ENCODE measurements at regions of chr2 and their contacts with region 1.

Region 1: GRCh38 chr2:240586198-240586918 is at the start of gene CAPN10:
- DNase-seq: peak; percentile 93 to 94
- H3K4me3 ChIP-seq: peak within 1 kb of the TSS; percentile 71
- H3K4me3 Mint-ChIP-seq: peak within 1 kb of the TSS; percentile 89
- H3K27ac Mint-ChIP-seq: peak within 1 kb of the TSS; percentile 71
- H3K4me1 ChIP-seq: no peaks in the 10 kb centered on the region
- H3K4me1 Mint-ChIP-seq: peaks cover 16% of the 10 kb centered on the region
- H3K27me3 ChIP-seq: no peaks in the 10 kb centered on the region
- H3K27me3 Mint-ChIP-seq: no peaks in the 10 kb centered on the region
- CTCF ChIP-seq: no peak
- total RNA-seq, gene CAPN10: 27.8 and 30.9 TPM in 2 replicates

Region 2: GRCh38 chr2:240339996-240340761 is 246.2 kb before region 1 on chr2:
- CTCF ChIA-PET with region 1: no interaction called
- POLR2A ChIA-PET with region 1: no interaction called
- intact Hi-C with region 1: no loop called
- DNase-seq: no peak
- H3K4me3 ChIP-seq: no peak overlapping the region
- H3K4me3 Mint-ChIP-seq: no peak overlapping the region
- H3K27ac Mint-ChIP-seq: no peak overlapping the region
- H3K4me1 ChIP-seq: no peaks in the 10 kb centered on the region
- H3K4me1 Mint-ChIP-seq: no peaks in the 10 kb centered on the region
- H3K27me3 ChIP-seq: no peaks in the 10 kb centered on the region
- H3K27me3 Mint-ChIP-seq: peaks cover 7% of the 10 kb centered on the region
- CTCF ChIP-seq: no peak

Region 3: DNA sequence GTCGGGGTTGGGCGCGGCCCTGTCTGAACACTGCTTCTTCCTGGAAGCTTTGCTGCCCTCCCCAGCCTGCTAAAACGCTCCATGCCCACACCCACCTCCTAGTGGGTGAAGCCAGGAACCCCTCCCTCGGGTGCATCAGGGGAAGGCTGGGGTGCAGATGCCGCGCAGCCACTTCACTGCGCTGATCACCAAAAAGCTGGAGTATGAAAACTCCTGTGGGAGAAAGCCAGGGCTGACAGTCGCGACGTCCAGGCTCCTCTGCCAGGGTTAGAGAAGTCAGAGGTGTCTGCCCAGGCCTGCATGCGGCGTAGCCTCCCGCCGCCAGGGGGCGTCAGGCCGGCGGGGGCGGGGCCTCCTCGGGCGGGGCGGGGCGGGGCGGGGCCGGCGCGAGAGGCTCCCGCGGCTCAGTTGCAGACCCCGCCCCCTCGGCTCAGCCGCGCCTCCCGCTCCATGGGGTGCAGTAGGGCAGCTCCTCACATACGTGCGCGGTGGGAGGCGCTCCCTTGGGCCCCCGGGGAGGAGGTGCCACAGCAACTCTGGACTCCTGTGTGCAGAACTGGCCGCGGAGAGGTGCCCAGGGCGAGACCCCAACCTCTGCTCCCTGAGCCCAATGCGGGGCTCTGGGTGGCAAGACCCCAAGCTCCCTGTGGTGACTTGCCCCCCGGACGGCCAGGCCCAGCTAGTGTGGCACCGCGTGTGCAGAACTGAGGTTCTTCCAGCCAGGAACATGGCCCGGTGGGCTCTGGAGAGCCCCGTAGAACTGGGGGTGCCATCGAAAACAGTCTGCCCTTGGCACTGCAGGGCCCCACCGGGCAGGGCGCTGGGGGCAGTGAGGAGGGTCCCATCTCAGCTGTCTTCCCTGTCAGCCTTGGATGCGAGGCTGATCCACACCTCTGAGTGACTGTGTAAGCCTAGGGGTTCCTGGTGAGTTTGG is 19.9 kb before region 1 on chr2:
- CTCF ChIA-PET with region 1: interaction called, 25 read pairs
- POLR2A ChIA-PET with region 1: interaction called, 14 read pairs
- intact Hi-C with region 1: no loop called
- DNase-seq: peak; percentile 89 to 91
- H3K4me3 ChIP-seq: peak overlapping the region; percentile 68
- H3K4me3 Mint-ChIP-seq: peak overlapping the region; percentile 83
- H3K27ac Mint-ChIP-seq: peak overlapping the region; percentile 71
- H3K4me1 ChIP-seq: peaks cover 26% of the 10 kb centered on the region
- H3K4me1 Mint-ChIP-seq: peaks cover 19% of the 10 kb centered on the region
- H3K27me3 ChIP-seq: no peaks in the 10 kb centered on the region
- H3K27me3 Mint-ChIP-seq: no peaks in the 10 kb centered on the region
- CTCF ChIP-seq: peak; percentile 64 to 71

Region 4: DNA sequence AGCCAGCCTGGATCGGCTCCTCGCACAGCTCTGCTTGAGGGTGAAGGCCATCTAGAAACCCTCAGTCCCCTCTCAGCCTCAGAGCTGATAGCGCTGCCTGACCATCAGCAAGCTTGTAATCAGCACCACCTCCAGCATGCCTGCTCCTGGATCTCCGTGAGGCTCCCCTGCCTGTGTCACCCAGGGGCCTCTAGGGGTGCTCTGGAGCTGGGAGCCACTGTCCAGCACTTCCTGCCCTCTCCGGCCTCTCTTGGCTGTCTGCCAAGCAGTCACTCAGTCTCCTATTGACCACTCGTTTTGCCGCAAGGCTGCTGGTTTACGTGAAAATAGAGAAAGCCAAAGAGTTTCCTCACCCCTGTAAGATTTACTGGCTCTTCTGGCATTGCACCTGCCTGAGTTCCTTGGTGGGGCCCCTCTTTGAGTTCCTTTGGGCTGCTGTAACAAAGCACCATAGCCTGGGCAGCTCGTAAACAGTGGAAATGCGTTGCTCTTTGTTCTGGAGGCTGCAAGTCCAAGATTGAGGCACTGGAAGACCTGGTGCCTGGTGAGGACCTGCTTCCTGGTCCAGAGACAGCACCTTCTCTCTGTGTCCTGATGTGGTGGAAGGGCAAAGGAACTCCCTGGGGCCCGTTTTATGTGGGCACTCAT is 18.1 kb after region 1 on chr2:
- CTCF ChIA-PET with region 1: interaction called, 8 read pairs
- POLR2A ChIA-PET with region 1: interaction called, 31 read pairs
- intact Hi-C with region 1: loop called (anchors 1 kb)
- DNase-seq: peak; percentile 82 to 88
- H3K4me3 ChIP-seq: peak overlapping the region; percentile 77
- H3K4me3 Mint-ChIP-seq: peak overlapping the region; percentile 78
- H3K27ac Mint-ChIP-seq: peak overlapping the region; percentile 79
- H3K4me1 ChIP-seq: no peaks in the 10 kb centered on the region
- H3K4me1 Mint-ChIP-seq: peaks cover 8% of the 10 kb centered on the region
- H3K27me3 ChIP-seq: no peaks in the 10 kb centered on the region
- H3K27me3 Mint-ChIP-seq: no peaks in the 10 kb centered on the region
- CTCF ChIP-seq: peak; percentile 42 to 72

Region 5: GRCh38 chr2:240685771-240686371 is 99.5 kb after region 1 on chr2:
- CTCF ChIA-PET with region 1: no interaction called
- POLR2A ChIA-PET with region 1: no interaction called
- intact Hi-C with region 1: no loop called
- DNase-seq: peak in 1 of 2 experiments; percentile 45
- H3K4me3 ChIP-seq: no peak overlapping the region
- H3K4me3 Mint-ChIP-seq: no peak overlapping the region
- H3K27ac Mint-ChIP-seq: no peak overlapping the region
- H3K4me1 ChIP-seq: peaks cover 9% of the 10 kb centered on the region; the same call in 1 of the 2 replicates
- H3K4me1 Mint-ChIP-seq: no peaks in the 10 kb centered on the region
- H3K27me3 ChIP-seq: no peaks in the 10 kb centered on the region
- H3K27me3 Mint-ChIP-seq: no peaks in the 10 kb centered on the region
- CTCF ChIP-seq: no peak

Region 6: GRCh38 chr2:241011751-241012510 is 425.6 kb after region 1 on chr2:
- CTCF ChIA-PET with region 1: no interaction called
- POLR2A ChIA-PET with region 1: no interaction called
- intact Hi-C with region 1: no loop called
- DNase-seq: no peak
- H3K4me3 ChIP-seq: no peak overlapping the region
- H3K4me3 Mint-ChIP-seq: no peak overlapping the region
- H3K27ac Mint-ChIP-seq: no peak overlapping the region
- H3K4me1 ChIP-seq: no peaks in the 10 kb centered on the region
- H3K4me1 Mint-ChIP-seq: no peaks in the 10 kb centered on the region
- H3K27me3 ChIP-seq: no peaks in the 10 kb centered on the region
- H3K27me3 Mint-ChIP-seq: no peaks in the 10 kb centered on the region
- CTCF ChIP-seq: no peak

Measured in Caco-2 (cell line).